ENCODE measurements at regions of chr7 and their contacts with region 1.

Region 1: GRCh38 chr7:132117211-132117610 is 459.1 kb downstream of the PLXNA4 start:
- DNase-seq: peak; percentile 68 to 84
- H3K4me3 ChIP-seq: no peak overlapping the region
- H3K27ac ChIP-seq: peak overlapping the region; percentile 89
- H3K4me1 ChIP-seq: peaks cover 52% of the 10 kb centered on the region
- H3K27me3 ChIP-seq: no peaks in the 10 kb centered on the region
- CTCF ChIP-seq: no peak

Region 2: GRCh38 chr7:132049462-132050304 is 67.5 kb before region 1 on chr7:
- CTCF ChIA-PET with region 1: no interaction called
- POLR2A ChIA-PET with region 1: no interaction called
- intact Hi-C with region 1: no loop called
- DNase-seq: no peak
- H3K4me3 ChIP-seq: no peak overlapping the region
- H3K27ac ChIP-seq: no peak overlapping the region
- H3K4me1 ChIP-seq: no peaks in the 10 kb centered on the region
- H3K27me3 ChIP-seq: no peaks in the 10 kb centered on the region
- CTCF ChIP-seq: peak; percentile 83

Region 3: GRCh38 chr7:132065193-132065988 is 51.8 kb before region 1 on chr7:
- CTCF ChIA-PET with region 1: no interaction called
- POLR2A ChIA-PET with region 1: no interaction called
- intact Hi-C with region 1: loop called (anchors 1 kb)
- DNase-seq: peak; percentile 82 to 85
- H3K4me3 ChIP-seq: no peak overlapping the region
- H3K27ac ChIP-seq: peak overlapping the region; percentile 70
- H3K4me1 ChIP-seq: peaks cover 23% of the 10 kb centered on the region
- H3K27me3 ChIP-seq: no peaks in the 10 kb centered on the region
- CTCF ChIP-seq: no peak

Region 4: GRCh38 chr7:132138817-132139216 is 21.6 kb after region 1 on chr7:
- CTCF ChIA-PET with region 1: no interaction called
- POLR2A ChIA-PET with region 1: no interaction called
- intact Hi-C with region 1: loop called (anchors 2 kb)
- DNase-seq: peak; percentile 77 to 85
- H3K4me3 ChIP-seq: no peak overlapping the region
- H3K27ac ChIP-seq: no peak overlapping the region
- H3K4me1 ChIP-seq: peaks cover 56% of the 10 kb centered on the region
- H3K27me3 ChIP-seq: no peaks in the 10 kb centered on the region
- CTCF ChIP-seq: no peak